K562 (cell line): ENCODE measurements at regions of chr18 and their contacts with region 1.

Region 1: DNA sequence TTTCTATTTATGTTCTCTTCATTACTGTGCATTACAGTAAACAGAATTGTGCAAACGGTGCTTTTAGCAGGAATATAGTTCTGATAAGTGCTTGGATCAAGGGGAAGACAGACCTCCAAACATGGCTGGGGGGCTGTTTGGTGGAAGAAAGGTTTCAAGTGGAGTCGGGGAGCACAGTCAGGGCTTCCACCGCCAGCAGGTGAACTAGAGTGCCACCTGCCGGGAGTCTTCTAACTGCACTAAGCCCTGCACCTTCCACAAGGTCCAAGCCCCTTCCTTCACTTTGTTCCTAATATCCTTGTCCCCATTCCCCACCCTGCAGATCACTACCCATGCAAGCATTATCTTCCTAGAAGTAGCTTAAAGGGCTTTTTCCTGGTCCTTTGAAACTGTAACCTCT is 11.1 kb downstream of the ONECUT2 start:
- DNase-seq: peak; percentile 22 to 55 (median 40)
- ATAC-seq: peak; percentile 95
- H3K4me3 ChIP-seq: no peak overlapping the region
- H3K27ac ChIP-seq: no peak overlapping the region
- H3K4me1 ChIP-seq: peaks cover 3 to 4% of the 10 kb centered on the region in 2 experiments; a peak in 3 of 5 replicates
- H3K27me3 ChIP-seq: peaks cover 0 to 2% of the 10 kb centered on the region in 2 experiments; a peak in 1 of 5 replicates
- CTCF ChIP-seq: peak; percentile 60 to 71 (median 61)
- EP300 ChIP-seq: no peak
- POLR2A ChIP-seq: no peak
- RAD21 ChIP-seq: peak; percentile 43 to 74

Region 2: GRCh38 chr18:56748698-56749268 is 697.5 kb before region 1 on chr18:
- CTCF ChIA-PET with region 1: interaction called, 3 read pairs
- POLR2A ChIA-PET with region 1: no interaction called
- in situ Hi-C with region 1: no loop called
- intact Hi-C with region 1: loop called (anchors 2 kb)
- DNase-seq: peak; percentile 6 to 38 (median 10)
- ATAC-seq: no peak
- H3K4me3 ChIP-seq: no peak overlapping the region
- H3K27ac ChIP-seq: no peak overlapping the region
- H3K4me1 ChIP-seq: no peaks in the 10 kb centered on the region
- H3K27me3 ChIP-seq: no peaks in the 10 kb centered on the region
- CTCF ChIP-seq: peak in 1 of 3 experiments; percentile 57; a peak in 3 of 6 replicates
- EP300 ChIP-seq: no peak
- POLR2A ChIP-seq: no peak
- RAD21 ChIP-seq: peak; percentile 61 to 65

Region 3: DNA sequence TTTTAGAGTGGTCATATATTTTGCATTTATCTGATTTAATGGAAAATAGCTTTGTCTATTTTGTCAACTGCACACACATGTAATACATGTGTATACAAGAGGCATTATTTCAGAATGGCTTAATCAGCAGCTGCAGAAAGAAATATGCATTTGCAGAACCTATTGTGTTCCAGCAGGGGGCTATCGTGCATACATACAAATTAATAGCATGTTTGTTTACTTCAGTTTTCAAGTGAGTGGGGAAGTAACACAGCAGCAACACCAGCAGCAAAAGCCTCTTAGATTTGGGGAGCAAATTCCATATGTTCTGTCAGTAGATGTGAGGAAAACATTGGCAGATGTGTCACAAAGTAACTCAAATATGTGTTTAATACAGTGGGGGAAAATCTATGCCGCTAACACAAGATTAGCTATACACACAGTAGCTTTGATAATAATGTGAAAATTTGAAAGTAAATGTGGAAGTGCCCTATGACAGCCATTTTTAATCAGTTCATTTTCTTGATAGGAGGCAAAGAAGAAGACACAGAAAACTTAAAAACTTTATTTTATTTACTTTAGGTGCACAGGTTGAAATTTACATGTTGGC is 577.0 kb before region 1 on chr18:
- CTCF ChIA-PET with region 1: interaction called, 8 read pairs
- POLR2A ChIA-PET with region 1: no interaction called
- in situ Hi-C with region 1: no loop called
- intact Hi-C with region 1: loop called (anchors 10 kb)
- DNase-seq: peak; percentile 4 to 32 (median 5)
- ATAC-seq: peak; percentile 49; the same call in 1 of the 3 replicates
- H3K4me3 ChIP-seq: no peak overlapping the region
- H3K27ac ChIP-seq: no peak overlapping the region
- H3K4me1 ChIP-seq: no peaks in the 10 kb centered on the region
- H3K27me3 ChIP-seq: no peaks in the 10 kb centered on the region
- CTCF ChIP-seq: peak; percentile 28 to 68 (median 58); a peak in 5 of 6 replicates
- EP300 ChIP-seq: no peak
- POLR2A ChIP-seq: no peak
- RAD21 ChIP-seq: peak; percentile 65 to 66

Region 4: DNA sequence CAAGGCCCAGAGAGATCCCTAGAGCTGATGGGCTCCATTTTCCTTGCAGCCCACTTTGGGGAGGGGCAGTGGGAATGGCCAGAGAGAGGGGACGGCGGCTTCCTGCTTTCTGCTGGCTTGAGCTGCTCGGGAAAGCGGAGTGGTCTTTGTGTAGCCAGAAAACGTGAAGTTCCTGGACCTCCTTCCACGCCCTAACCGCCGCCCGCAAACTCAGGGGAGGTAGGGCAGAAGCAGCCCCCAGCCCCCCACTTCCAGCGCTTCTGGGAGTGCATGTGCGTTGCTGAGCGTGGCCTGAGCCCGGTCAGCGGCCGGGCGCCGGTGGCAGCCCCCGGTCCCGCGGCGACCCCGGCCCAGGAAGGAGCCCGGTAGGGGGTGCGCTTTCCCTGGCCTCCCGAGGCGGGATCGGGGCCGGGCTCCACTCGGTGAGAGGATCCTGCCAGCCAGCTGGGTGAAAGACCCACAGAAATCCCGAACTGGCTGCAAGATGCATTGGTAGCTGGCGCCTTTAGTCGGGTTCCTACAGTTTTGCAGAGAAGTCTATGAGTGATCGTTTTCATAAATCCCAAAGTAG is 324.7 kb before region 1 on chr18:
- CTCF ChIA-PET with region 1: no interaction called
- POLR2A ChIA-PET with region 1: no interaction called
- in situ Hi-C with region 1: no loop called
- intact Hi-C with region 1: loop called (anchors 2 kb)
- DNase-seq: no peak
- ATAC-seq: peak; percentile 45
- H3K4me3 ChIP-seq: peak overlapping the region; percentile 8; the same call in 1 of the 2 replicates
- H3K27ac ChIP-seq: no peak overlapping the region
- H3K4me1 ChIP-seq: peaks cover 0 to 4% of the 10 kb centered on the region in 2 experiments; a peak in 2 of 5 replicates
- H3K27me3 ChIP-seq: peaks cover 0 to 11% of the 10 kb centered on the region in 2 experiments; a peak in 2 of 5 replicates
- CTCF ChIP-seq: peak in 1 of 3 experiments; percentile 27; a peak in 2 of 6 replicates
- EP300 ChIP-seq: no peak
- POLR2A ChIP-seq: no peak
- RAD21 ChIP-seq: peak; percentile 38 to 48